Right cardiac atrium (tissue), 5 donors: ENCODE measurements at regions of chr5 and their contacts with region 1.

Region 1: DNA sequence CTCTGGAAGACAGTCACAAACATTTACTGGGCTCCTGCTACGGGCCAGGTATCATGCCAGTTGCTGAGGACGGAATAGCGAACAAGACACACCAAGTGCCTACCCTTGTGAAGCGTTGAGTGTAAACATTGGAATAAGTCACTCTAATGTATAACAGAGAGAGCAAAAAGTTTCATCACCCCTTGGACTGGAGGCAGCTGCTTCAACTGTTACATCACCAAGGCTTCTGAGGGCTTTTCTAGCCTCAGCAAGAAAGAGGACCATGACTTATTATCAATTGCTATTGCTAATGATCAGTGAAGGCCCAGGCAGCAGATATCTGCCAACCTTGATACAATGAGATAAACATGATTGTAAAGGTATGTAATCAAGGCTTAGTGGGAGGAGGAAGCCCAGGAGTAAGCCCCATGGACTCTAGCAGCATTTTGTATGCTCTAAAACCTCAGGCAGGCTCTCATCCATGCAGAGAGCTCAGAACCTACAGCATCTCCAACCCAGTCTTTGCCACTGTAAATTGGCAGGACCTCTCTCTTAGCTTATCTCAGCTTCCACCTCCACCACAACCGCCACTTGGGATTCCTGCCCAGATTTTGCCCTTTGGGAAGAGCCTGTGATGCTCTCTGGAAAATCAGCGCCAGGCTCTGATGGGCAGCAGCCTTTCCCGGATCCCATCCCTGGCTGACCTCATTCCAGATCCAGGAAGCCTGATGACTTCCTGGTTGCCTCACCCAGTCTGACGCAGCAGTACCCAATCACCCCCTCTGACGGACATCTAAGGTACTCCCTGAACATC is 54.5 kb downstream of the ADAM19 start:
- DNase-seq: peak; percentile 66 to 85 (median 79)
- ATAC-seq: peak; percentile 69 to 87
- H3K4me3 ChIP-seq: no peak overlapping the region
- H3K27ac ChIP-seq: peak overlapping the region; percentile 5
- H3K4me1 ChIP-seq: peaks cover 8% of the 10 kb centered on the region
- H3K27me3 ChIP-seq: no peaks in the 10 kb centered on the region

Region 2: GRCh38 chr5:157563373-157563928 is 42.3 kb after region 1 on chr5:
- intact Hi-C with region 1: loop called in 1 of 4 experiments (anchors 5 kb)
- DNase-seq: peak; percentile 78 to 84 (median 80)
- ATAC-seq: peak; percentile 67 to 79
- H3K4me3 ChIP-seq: no peak overlapping the region
- H3K27ac ChIP-seq: peak overlapping the region; percentile 93
- H3K4me1 ChIP-seq: peaks cover 23% of the 10 kb centered on the region
- H3K27me3 ChIP-seq: no peaks in the 10 kb centered on the region

Region 3: GRCh38 chr5:157575381-157576020 is 54.4 kb after region 1 on chr5 and contains the start of gene ADAM19:
- intact Hi-C with region 1: loop called in 2 of 4 experiments (anchors 10 kb)
- DNase-seq: peak; percentile 63 to 89 (median 86)
- ATAC-seq: peak; percentile 93
- H3K4me3 ChIP-seq: peak within 1 kb of the TSS; percentile 43
- H3K27ac ChIP-seq: peak within 1 kb of the TSS; percentile 56
- H3K4me1 ChIP-seq: peaks cover 9% of the 10 kb centered on the region
- H3K27me3 ChIP-seq: no peaks in the 10 kb centered on the region
- total RNA-seq, gene ADAM19: 21.7 to 60.2 (median 24.5) TPM

Region 4: DNA sequence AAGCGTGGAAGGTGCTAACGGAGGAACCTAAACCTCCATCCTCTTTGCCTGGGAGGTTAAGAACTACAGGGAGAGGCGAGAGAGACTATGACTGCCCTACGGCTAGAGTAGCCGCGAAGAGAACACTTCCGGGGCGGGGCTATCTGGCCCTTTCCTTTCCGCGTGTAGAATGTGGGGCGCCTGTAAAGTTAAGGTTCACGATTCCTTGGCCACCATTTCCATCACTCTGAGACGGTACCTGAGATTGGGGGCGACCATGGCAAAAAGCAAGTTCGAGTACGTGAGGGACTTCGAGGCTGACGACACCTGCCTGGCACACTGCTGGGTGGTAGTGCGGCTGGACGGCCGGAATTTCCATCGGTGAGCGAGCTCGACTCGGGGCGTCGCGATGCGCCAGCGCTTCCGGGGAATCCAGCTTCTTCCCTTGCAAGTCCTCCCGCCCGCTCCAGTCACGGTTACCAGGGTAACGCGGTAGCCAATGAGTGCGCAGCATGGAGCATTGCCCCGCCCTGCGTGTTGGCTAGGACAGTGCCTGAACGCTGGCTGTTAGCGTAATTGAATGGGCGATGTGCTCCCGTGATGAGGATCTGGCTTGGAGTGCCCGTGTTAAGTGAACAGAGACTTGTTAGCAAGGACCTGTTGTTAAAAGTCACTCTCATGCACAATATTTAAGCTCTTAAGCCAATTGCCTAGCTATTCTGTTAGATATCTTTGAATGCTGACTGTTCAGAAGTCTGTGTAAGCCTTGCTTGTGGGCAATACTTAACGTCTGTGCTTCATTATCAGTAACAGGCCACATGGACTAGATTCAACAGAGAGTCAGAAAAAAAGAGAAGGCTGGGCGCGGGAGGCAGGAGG is 210.4 kb after region 1 on chr5 and contains the start of gene THG1L:
- intact Hi-C with region 1: no loop called
- DNase-seq: peak; percentile 98 to 99 (median 99)
- ATAC-seq: peak; percentile 100
- H3K4me3 ChIP-seq: peak within 1 kb of the TSS; percentile 44
- H3K27ac ChIP-seq: peak within 1 kb of the TSS; percentile 84
- H3K4me1 ChIP-seq: no peaks in the 10 kb centered on the region
- H3K27me3 ChIP-seq: no peaks in the 10 kb centered on the region
- total RNA-seq, gene THG1L: 6.3 to 11.6 (median 7.3) TPM

Region 5: GRCh38 chr5:157994906-157995519 is 473.9 kb after region 1 on chr5:
- intact Hi-C with region 1: no loop called
- DNase-seq: peak; percentile 65 to 84 (median 79)
- ATAC-seq: peak; percentile 94 to 96
- H3K4me3 ChIP-seq: no peak overlapping the region
- H3K27ac ChIP-seq: no peak overlapping the region
- H3K4me1 ChIP-seq: no peaks in the 10 kb centered on the region
- H3K27me3 ChIP-seq: no peaks in the 10 kb centered on the region

Region 6: DNA sequence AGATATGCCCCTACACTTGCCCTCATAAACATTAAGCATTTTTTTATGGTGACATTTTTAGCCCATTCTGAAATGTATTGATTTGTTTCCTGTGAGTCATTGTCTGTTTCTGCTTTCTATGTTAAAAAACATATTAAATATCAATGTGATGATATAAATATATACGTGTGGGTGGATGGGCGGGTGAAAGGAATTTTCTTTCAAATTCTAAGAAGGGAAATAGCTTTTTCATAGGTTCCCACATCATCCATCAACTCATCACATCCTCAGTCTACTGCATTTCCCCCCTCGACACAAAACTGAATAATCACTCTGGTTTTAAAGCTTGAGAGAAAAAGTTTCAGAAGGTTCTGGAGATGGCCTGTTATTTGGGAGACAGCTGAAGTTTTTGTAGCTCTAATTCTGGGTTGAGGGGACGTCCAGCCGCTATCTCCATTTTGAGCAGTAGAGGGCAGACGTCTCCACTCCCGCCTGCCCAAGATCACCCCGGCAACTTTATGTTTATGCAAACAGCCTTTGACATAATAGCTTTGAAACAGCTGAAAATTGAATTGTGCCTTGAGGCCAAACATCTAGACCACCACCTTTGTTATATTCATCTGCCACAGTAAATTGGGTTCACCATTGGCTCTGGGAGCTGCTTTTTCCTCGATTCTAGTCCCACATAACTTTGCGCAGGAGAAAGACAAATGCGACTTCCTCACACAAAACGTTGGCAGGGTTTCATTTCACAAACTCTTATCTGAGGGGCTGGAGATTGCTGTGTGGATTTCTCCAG is 554.1 kb after region 1 on chr5:
- intact Hi-C with region 1: no loop called
- DNase-seq: peak; percentile 52 to 79 (median 65)
- ATAC-seq: peak; percentile 90 to 91
- H3K4me3 ChIP-seq: peak overlapping the region; percentile 69
- H3K27ac ChIP-seq: peak overlapping the region; percentile 45
- H3K4me1 ChIP-seq: no peaks in the 10 kb centered on the region
- H3K27me3 ChIP-seq: no peaks in the 10 kb centered on the region